H1 (cell line): ENCODE measurements at regions of chr16 and their contacts with region 1.

Region 1: DNA sequence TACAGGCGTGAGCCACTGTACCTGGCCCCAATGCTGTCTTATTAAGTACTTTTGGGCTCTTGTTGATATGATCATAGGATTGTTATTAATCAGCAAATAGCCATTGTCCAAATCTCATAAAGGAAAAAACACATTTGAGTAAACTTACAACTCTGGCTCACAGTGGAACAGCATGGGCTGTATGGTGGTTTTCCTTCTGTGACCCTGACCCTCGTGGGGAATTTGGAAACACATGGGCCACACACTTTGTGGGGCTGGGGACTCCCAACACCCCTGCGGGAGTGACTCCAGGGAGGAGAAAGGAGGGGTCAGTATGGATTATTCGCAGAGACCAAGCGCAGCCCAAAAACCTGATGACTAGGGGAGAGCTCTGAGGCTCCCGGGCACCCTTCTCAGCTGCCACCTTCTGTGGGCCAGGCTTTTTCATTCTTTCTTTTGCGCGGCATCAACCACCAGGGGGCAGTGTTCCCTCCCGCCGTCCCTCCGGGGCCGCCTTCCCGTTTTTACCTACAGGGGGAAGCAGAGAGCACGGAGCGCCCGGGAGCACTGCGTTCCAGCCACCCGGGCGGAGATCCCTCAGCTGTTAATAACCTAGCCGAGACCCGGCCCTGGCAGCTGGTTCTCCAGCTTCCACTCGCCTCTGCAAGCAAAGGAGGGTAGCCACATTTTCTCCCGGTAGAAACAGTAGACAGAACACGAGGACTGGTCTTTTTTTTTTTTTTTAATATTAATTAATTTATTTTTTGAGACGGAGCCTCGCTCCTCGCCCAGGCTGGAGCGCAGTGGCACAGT is 9.7 kb downstream of the TSNAXIP1 start:
- DNase-seq: peak; percentile 25 to 99
- H3K4me3 ChIP-seq: no peak overlapping the region
- H3K27ac ChIP-seq: no peak overlapping the region
- H3K4me1 ChIP-seq: no peaks in the 10 kb centered on the region
- H3K27me3 ChIP-seq: no peaks in the 10 kb centered on the region; a peak in 1 of 7 replicates
- CTCF ChIP-seq: peak; percentile 98 to 100 (median 99)
- EP300 ChIP-seq: no peak
- POLR2A ChIP-seq: no peak
- RAD21 ChIP-seq: peak; percentile 78 to 86

Region 2: DNA sequence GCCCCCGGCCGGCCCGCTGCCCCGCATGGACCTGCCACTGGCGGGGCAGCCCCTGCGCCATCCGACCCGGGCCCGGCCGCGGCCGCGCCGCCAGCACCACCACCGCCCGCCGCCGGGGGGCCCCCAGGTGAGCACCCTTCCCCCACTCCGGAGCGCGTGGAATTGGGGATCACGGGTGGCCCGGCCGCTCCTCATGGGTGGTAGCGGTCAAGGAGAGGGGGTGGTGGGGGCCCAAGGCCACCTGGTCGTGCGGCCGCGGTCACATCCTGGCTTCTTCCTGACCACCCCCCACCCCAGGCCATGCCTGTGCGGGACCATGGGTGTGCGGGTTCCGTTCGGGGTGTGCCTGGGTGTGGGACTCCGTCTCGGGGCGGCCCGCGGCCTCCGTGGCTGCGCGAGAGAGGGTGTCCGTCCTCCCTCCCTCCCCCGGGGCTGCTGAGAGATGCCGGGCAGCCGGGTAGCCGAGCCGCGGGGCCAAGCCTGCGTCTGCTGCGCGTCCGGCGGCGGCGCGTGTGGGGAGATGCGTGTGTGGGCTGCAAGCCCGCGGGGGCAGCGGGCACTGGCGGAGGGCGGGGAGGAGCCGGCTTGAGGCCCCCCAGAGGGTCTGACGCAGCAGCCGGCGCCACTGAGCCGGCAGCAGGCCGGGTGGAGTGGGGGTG is 163.2 kb before region 1 on chr16:
- CTCF ChIA-PET with region 1: no interaction called
- POLR2A ChIA-PET with region 1: no interaction called
- DNase-seq: no peak
- H3K4me3 ChIP-seq: peak overlapping the region; percentile 47 to 76 (median 58)
- H3K27ac ChIP-seq: no peak overlapping the region
- H3K4me1 ChIP-seq: peaks cover 0 to 18% (median 5%) of the 10 kb centered on the region in 4 experiments; a peak in 5 of 7 replicates
- H3K27me3 ChIP-seq: peaks cover 0 to 23% (median 17%) of the 10 kb centered on the region in 4 experiments; a peak in 4 of 7 replicates
- CTCF ChIP-seq: peak; percentile 14 to 40 (median 24); a peak in 3 of 4 replicates
- EP300 ChIP-seq: no peak
- POLR2A ChIP-seq: no peak
- RAD21 ChIP-seq: no peak

Region 3: GRCh38 chr16:67833418-67834241 is 17.2 kb after region 1 on chr16:
- CTCF ChIA-PET with region 1: interaction called, 100 read pairs
- POLR2A ChIA-PET with region 1: interaction called, 15 read pairs
- DNase-seq: peak in 1 of 2 experiments; percentile 97
- H3K4me3 ChIP-seq: peak overlapping the region; percentile 62 to 78 (median 74)
- H3K27ac ChIP-seq: no peak overlapping the region
- H3K4me1 ChIP-seq: no peaks in the 10 kb centered on the region; a peak in 1 of 7 replicates
- H3K27me3 ChIP-seq: no peaks in the 10 kb centered on the region
- CTCF ChIP-seq: peak in 1 of 3 experiments; percentile 7; a peak in 1 of 4 replicates
- EP300 ChIP-seq: no peak
- POLR2A ChIP-seq: peak in 1 of 2 experiments; percentile 84; a peak in 2 of 3 replicates
- RAD21 ChIP-seq: no peak

Region 4: DNA sequence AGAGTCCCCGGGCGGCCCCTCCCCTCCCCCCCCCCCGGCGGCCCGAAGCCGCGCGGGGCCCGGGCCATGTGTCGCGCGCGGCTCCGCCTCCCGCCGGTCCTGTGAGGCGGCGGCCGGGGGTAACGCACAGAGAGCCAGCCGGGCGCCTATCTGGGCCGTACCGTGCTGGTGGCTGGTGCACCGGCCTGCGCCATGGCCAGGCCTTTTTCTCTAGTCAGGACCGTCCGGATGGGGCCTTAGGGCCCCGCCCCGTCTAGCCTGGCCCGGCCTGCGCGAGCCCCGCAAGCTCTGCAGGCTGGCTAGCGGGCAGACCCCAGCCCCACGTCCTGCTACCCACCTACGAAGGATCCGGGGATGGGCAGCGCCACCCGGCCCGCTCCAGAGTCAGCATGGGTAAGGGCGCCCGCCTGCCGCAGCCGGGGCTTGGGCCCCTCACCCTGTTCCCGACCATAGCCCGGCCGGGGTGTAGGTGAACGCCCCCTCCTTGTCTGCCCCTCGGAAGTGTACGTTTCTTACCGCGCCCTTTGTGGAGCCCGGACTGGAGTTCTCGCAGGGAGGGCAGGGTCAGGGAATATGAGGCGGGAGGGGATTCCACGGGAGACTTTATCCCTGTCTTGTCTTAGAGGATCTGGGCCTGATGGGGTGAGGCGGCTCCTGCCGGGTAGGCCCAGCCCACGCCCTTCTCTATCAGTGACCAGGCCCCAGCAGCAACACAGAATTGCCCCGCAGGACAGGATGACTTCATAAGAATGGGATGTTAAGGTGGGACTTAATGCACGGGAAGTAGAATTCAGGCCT is 30.8 kb after region 1 on chr16 and contains the start of gene CENPT:
- CTCF ChIA-PET with region 1: interaction called, 21 read pairs
- POLR2A ChIA-PET with region 1: interaction called, 4 read pairs
- DNase-seq: peak in 1 of 2 experiments; percentile 69
- H3K4me3 ChIP-seq: peak within 1 kb of the TSS; percentile 91 to 95 (median 93)
- H3K27ac ChIP-seq: peak within 1 kb of the TSS; percentile 84
- H3K4me1 ChIP-seq: peaks cover 6 to 27% (median 14%) of the 10 kb centered on the region in 4 experiments
- H3K27me3 ChIP-seq: no peaks in the 10 kb centered on the region
- CTCF ChIP-seq: no peak
- EP300 ChIP-seq: no peak
- POLR2A ChIP-seq: peak in 1 of 2 experiments; percentile 19; a peak in 1 of 3 replicates
- RAD21 ChIP-seq: no peak
- total RNA-seq, gene CENPT: 42.2 and 42.4 TPM in 2 replicates

Region 5: GRCh38 chr16:67865316-67865715 is 48.9 kb after region 1 on chr16:
- CTCF ChIA-PET with region 1: interaction called, 32 read pairs
- POLR2A ChIA-PET with region 1: interaction called, 3 read pairs
- DNase-seq: no peak
- H3K4me3 ChIP-seq: no peak overlapping the region
- H3K27ac ChIP-seq: no peak overlapping the region
- H3K4me1 ChIP-seq: peaks cover 0 to 4% (median 0%) of the 10 kb centered on the region in 4 experiments; a peak in 2 of 7 replicates
- H3K27me3 ChIP-seq: no peaks in the 10 kb centered on the region
- CTCF ChIP-seq: peak; percentile 76 to 83 (median 79)
- EP300 ChIP-seq: no peak
- POLR2A ChIP-seq: no peak
- RAD21 ChIP-seq: peak; percentile 80 to 82